ENCODE measurements at regions of chr19 and their contacts with region 1.

Region 1: DNA sequence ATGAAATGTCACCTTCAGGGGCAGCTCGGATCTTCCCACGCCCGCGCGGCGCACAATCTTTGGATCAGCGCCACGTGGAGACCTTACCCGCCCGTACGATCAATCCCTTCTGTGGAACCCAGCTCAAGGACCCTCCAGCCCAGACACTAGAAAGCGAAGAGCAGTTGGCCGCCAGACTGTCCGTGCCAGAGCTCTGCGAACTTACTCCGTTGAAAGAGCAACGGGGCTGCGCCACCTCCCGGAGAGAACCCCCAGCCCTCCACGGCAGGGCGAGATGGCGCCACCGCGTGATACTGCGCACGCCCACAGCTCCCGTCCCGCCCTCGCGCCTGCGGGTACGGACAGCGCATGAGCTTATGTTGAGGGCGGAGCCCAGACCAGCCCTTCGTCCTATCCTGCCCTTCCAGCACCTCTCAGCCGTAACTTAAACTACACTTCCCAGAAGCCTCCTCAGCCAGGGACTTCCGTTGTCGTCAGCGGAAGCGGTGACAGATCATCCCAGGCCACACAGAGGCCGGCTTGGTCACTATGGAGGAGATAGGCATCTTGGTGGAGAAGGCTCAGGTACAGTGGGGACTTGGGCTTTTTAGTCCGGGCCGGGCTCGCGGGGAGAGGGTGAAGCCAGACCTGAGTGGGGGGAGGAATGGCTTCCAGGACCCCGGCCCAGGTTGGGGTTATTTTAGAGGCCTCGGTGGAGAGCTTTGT is at the start of gene PSMC4:
- DNase-seq: peak; percentile 99
- H3K4me3 ChIP-seq: peak within 1 kb of the TSS; percentile 67 to 82
- H3K27ac ChIP-seq: peak within 1 kb of the TSS; percentile 96
- H3K4me1 ChIP-seq: peaks cover 25% of the 10 kb centered on the region
- H3K27me3 ChIP-seq: no peaks in the 10 kb centered on the region
- CTCF ChIP-seq: peak; percentile 34 to 67 (median 54)
- POLR2A ChIP-seq: peak in 1 of 2 donors; percentile 83
- total RNA-seq, gene PSMC4: 74.9 TPM

Region 2: DNA sequence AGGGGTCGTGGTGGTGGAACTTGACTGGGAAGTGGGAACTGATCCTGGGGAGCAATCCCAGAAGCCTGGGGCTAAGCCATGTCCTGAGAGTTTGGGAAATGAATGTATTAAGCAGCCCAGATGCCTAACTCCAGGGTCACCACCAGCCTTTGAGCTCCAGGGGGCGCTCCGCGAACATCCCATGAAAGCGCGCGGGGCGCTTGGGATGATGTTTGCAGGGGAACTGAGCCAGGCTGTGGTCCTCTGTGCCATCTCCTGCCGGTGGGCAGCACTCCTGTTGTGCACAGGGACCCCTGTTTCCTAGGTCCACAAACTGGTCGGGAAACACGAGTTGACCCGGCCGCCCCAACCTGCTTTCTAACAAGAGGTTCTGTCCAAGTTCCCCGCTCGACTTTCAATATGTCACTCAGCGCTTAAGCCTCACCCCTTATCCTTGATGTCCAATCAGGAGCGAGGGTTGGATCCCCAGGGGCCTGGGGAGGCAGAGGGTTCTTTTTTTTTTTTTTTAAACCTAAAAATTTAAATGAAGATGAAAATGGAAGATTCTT is 177.8 kb before region 1 on chr19:
- intact Hi-C with region 1: loop called (anchors 10 kb)
- DNase-seq: no peak
- H3K4me3 ChIP-seq: peak overlapping the region; percentile 16 to 36
- H3K27ac ChIP-seq: no peak overlapping the region
- H3K4me1 ChIP-seq: no peaks in the 10 kb centered on the region
- H3K27me3 ChIP-seq: no peaks in the 10 kb centered on the region
- CTCF ChIP-seq: peak; percentile 72 to 78 (median 73)
- POLR2A ChIP-seq: no peak

Region 3: DNA sequence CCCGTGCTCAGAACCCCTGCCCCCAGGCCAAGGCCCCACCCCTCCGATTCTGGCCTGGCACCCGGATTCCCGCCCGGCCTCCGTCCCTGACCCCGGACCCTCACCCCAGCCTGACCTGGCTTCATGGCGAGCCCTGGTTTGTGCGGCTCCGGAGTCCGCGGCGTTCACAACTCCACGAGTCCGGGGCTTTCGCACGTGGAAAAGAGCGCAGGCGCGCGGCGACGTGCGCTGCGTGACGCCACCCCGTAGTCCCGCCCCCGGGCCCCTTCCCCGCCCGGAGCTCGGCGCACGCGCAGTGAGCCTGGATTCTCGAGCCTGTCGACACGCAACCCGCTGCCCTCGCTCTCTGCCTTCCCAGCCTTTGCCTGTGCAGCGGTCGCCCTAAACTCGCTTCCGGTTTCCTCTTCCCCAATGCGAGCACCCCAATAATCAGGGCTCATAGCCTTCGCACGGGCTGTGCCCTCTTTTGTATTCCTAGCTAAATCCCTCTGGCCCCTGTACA is 124.6 kb before region 1 on chr19 and contains the start of gene FBL:
- intact Hi-C with region 1: loop called (anchors 10 kb)
- DNase-seq: no peak
- H3K4me3 ChIP-seq: peak within 1 kb of the TSS; percentile 78 to 92
- H3K27ac ChIP-seq: peak within 1 kb of the TSS; percentile 85
- H3K4me1 ChIP-seq: peaks cover 46% of the 10 kb centered on the region
- H3K27me3 ChIP-seq: no peaks in the 10 kb centered on the region
- CTCF ChIP-seq: no peak
- POLR2A ChIP-seq: peak in 1 of 2 donors; percentile 68
- total RNA-seq, gene FBL: 180 TPM

Region 4: DNA sequence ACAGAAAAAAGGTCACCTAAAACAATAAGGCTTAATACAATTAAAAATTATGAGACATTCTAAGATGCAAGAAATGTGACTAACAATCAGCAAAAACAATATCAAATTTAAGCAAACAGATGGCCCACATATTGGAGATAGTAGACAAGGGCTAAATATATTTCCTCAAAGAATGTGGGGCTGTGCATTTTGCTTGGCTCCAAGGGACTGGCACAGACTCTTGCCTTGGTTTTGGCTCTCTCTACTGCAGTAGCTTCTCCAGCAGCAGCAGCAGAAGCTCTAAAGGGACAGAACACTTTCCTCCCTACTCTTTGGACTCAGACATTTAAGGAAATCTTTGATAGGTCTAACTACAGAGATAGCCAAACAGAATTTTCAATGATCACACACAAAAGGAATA is 158.2 kb after region 1 on chr19:
- intact Hi-C with region 1: no loop called
- DNase-seq: no peak
- H3K4me3 ChIP-seq: no peak overlapping the region
- H3K27ac ChIP-seq: no peak overlapping the region
- H3K4me1 ChIP-seq: no peaks in the 10 kb centered on the region
- H3K27me3 ChIP-seq: no peaks in the 10 kb centered on the region
- CTCF ChIP-seq: no peak
- POLR2A ChIP-seq: no peak

Measured in vagina (tissue), 2 donors.